ENCODE measurements at regions of chr7 and their contacts with region 1.

Region 1: GRCh38 chr7:95916573-95917297 is 144.4 kb downstream of the DYNC1I1 start:
- DNase-seq: peak; percentile 68 to 82 (median 70)
- ATAC-seq: peak; percentile 33 to 85 (median 70)
- H3K4me3 ChIP-seq: peak overlapping the region in 4 of 12 donors; percentile 4 to 35 (median 16)
- H3K27ac ChIP-seq: no peak overlapping the region
- H3K4me1 ChIP-seq: peaks cover 0 to 5% (median 0%) of the 10 kb centered on the region in 12 donors
- H3K27me3 ChIP-seq: no peaks in the 10 kb centered on the region
- CTCF ChIP-seq: peak; percentile 87 to 96 (median 92)
- POLR2A ChIP-seq: no peak

Region 2: DNA sequence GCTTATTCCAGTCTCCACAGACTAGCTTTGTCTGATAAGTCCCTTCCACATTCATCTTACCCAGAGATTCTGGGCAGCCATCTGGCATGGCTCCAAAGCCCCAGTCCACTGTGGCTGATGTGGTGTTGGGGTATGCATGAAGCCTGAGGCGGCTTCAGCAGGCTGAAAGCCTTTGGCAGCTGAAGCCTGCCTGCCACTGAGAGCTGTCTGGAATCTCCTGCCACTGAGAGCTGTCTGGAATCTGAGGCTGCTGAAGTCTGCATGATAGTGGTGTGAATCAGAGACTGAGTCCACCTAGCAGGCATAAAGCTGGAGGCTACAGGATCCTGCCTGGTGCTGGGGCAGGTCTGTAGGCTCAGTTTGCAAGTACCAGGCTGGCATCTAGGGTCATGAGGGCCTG is 57.3 kb before region 1 on chr7:
- intact Hi-C with region 1: no loop called
- DNase-seq: peak in 2 of 5 donors; percentile 8 to 31
- ATAC-seq: peak; percentile 49 to 77 (median 63)
- H3K4me3 ChIP-seq: no peak overlapping the region
- H3K27ac ChIP-seq: no peak overlapping the region
- H3K4me1 ChIP-seq: no peaks in the 10 kb centered on the region
- H3K27me3 ChIP-seq: no peaks in the 10 kb centered on the region
- CTCF ChIP-seq: no peak
- POLR2A ChIP-seq: no peak

Region 3: GRCh38 chr7:95989301-95989700 is 72.6 kb after region 1 on chr7:
- intact Hi-C with region 1: loop called in 1 of 10 experiments (anchors 10 kb)
- DNase-seq: no peak
- ATAC-seq: peak in 1 of 4 donors; percentile 50
- H3K4me3 ChIP-seq: no peak overlapping the region
- H3K27ac ChIP-seq: no peak overlapping the region
- H3K4me1 ChIP-seq: peaks cover 0 to 3% (median 0%) of the 10 kb centered on the region in 12 donors
- H3K27me3 ChIP-seq: no peaks in the 10 kb centered on the region
- CTCF ChIP-seq: no peak
- POLR2A ChIP-seq: no peak

Region 4: DNA sequence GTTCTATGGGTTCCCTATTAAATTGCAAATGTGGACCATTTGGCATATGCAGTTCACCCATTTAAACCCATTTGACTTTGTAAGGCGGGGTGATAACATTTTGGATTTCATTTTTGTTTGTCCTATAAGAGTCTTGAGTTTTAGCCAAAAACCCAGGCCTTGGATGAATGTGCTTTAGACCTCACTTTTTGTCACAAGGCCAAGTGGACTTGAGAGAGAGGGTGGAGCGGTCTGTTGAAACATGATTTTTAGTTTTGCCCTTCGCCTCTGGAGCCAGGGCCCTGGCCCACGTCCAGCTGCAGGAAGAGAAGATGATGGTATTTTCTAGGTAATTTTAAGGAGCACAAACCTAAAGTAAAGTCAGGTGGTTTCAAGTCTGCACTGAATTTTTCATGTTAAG is 145.1 kb after region 1 on chr7:
- intact Hi-C with region 1: loop called in 2 of 10 experiments (anchors 5 to 10 kb)
- DNase-seq: peak in 1 of 5 donors; percentile 11
- ATAC-seq: no peak
- H3K4me3 ChIP-seq: no peak overlapping the region
- H3K27ac ChIP-seq: no peak overlapping the region
- H3K4me1 ChIP-seq: no peaks in the 10 kb centered on the region
- H3K27me3 ChIP-seq: no peaks in the 10 kb centered on the region
- CTCF ChIP-seq: no peak
- POLR2A ChIP-seq: no peak

Region 5: GRCh38 chr7:96075510-96076349 is 159.0 kb after region 1 on chr7:
- intact Hi-C with region 1: loop called in 2 of 10 experiments (anchors 5 kb)
- DNase-seq: peak; percentile 48 to 73 (median 59)
- ATAC-seq: peak; percentile 89 to 98 (median 95)
- H3K4me3 ChIP-seq: peak overlapping the region; percentile 24 to 71 (median 54)
- H3K27ac ChIP-seq: no peak overlapping the region
- H3K4me1 ChIP-seq: peaks cover 0 to 9% (median 4%) of the 10 kb centered on the region in 12 donors
- H3K27me3 ChIP-seq: peaks cover 0 to 23% (median 0%) of the 10 kb centered on the region in 9 donors
- CTCF ChIP-seq: peak; percentile 66 to 91 (median 80)
- POLR2A ChIP-seq: no peak

Region 6: DNA sequence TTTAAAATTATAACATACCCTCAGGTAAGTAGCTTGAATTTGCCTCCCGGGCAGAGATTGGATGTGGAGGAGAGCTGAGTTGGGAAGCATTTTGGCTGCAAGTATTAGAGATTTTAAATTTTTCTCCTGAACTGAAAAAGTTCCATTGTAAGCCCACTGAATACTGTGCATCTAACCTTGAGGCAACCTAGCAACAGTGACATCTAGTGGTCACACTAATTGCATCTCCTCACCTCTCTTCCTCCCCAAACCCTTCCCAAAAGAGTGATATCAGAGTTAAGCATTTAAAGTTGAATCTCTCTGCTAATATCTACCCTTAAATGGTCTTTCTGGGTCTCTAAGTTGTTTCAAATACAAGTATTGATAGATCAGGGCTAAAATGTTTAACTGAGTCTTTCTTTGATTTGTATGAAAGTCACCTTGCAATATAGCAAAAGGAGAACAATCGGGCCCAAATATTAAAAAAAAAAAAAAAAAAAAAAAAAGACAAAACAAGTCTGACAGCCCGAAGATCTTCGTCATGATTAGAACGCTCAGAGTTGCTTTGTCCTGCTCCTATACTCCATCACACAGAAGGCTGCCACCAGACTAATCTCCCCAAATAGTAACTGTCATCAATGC is 1148.3 kb after region 1 on chr7:
- intact Hi-C with region 1: loop called in 9 of 10 experiments (anchors 2 to 10 kb)
- DNase-seq: peak in 1 of 5 donors; percentile 13
- ATAC-seq: peak in 3 of 4 donors; percentile 52 to 78 (median 70)
- H3K4me3 ChIP-seq: no peak overlapping the region
- H3K27ac ChIP-seq: no peak overlapping the region
- H3K4me1 ChIP-seq: no peaks in the 10 kb centered on the region
- H3K27me3 ChIP-seq: peaks cover 0 to 12% (median 0%) of the 10 kb centered on the region in 9 donors
- CTCF ChIP-seq: peak; percentile 58 to 80 (median 70)
- POLR2A ChIP-seq: no peak

Measured in heart left ventricle (tissue), 16 donors.